ENCODE measurements at regions of chr4 and their contacts with region 1.

Region 1: DNA sequence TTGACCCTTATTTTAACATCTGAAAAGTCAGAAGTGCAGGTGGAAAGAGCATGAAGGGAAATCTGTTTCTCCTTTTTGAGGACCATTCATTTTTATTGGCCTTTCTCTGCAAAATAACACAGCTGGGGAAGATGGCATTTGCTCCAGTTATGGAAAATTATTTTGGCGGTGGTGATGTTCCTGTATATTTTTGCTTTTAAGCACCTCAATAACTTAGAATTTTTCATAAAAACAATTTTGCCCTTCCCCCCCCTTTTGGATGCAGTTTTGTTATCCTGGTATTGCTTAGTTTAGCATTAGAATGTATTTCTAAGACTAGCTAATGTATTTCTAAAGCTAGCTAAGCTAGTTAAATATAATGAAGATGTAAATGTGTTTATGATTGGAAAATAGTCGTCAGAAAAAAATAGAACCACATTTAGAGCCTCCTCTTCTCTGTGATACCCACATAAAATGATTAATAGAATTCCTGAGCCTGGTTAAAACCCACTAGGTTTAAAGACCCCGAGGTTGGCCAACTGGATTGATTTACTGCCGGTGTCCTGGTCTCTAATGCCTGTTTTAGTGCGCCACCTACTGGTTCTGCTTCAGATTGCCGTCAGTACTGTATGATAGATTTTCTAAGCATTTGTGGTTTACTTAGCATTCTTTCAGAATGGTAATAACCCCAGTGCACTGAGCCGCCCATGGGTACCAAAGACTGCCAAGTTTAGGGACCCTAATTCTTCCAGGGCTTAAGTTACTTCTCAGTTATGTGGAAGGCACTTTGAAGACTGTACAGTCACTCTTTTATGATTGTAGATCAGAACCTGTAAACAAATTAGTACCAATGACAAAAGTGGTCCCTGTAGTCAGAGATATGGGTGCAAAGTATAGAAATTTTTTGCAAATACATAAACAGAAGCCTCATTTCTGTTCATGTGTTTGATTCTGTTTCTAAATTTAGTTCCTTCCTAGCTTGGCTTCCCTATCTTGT is 11.4 kb downstream of the KLF3 start:
- DNase-seq: peak; percentile 95
- H3K4me3 Mint-ChIP-seq: peak overlapping the region; percentile 71
- H3K27ac Mint-ChIP-seq: peak overlapping the region; percentile 82
- H3K4me1 Mint-ChIP-seq: peaks cover 85% of the 10 kb centered on the region
- H3K27me3 Mint-ChIP-seq: no peaks in the 10 kb centered on the region

Region 2: GRCh38 chr4:38062088-38062893 is 613.1 kb before region 1 on chr4:
- CTCF ChIA-PET with region 1: interaction called, 6 read pairs
- intact Hi-C with region 1: loop called (anchors 1 kb)
- DNase-seq: peak; percentile 84
- H3K4me3 Mint-ChIP-seq: peak overlapping the region; percentile 79
- H3K27ac Mint-ChIP-seq: peak overlapping the region; percentile 75
- H3K4me1 Mint-ChIP-seq: peaks cover 12% of the 10 kb centered on the region
- H3K27me3 Mint-ChIP-seq: no peaks in the 10 kb centered on the region

Region 3: DNA sequence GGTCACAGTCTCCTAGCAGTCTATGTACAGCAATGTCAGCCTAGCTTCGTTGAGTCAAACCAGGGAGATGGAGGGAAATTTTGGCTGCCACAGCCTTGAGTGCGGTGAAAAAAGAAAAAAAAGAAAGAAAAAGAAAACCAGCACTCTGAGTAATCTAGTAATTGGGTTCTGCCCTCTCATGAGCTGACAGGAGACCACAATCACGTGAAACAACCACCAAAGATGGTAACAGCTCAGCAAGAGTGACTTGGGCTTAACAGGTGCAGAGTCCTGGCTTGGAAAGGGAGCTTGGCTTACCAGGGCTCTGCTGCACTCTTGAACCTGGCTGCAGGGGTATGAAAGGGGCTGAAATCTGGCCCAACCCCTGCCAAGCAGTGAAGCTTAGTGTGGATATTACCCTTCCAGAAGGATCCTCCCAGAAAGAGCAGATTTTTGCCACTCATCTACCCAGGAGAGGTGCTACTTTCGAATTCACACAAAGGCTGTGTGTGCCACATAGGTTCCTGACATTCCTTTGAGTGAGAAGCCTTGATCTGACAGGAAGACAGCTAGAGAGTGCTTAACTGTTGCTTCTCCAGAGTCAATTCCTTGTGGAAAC is 364.9 kb before region 1 on chr4:
- CTCF ChIA-PET with region 1: interaction called, 6 read pairs
- intact Hi-C with region 1: loop called (anchors 2 kb)
- DNase-seq: peak; percentile 89
- H3K4me3 Mint-ChIP-seq: peak overlapping the region; percentile 10
- H3K27ac Mint-ChIP-seq: peak overlapping the region; percentile 72
- H3K4me1 Mint-ChIP-seq: peaks cover 65% of the 10 kb centered on the region
- H3K27me3 Mint-ChIP-seq: peaks cover 2% of the 10 kb centered on the region

Region 4: DNA sequence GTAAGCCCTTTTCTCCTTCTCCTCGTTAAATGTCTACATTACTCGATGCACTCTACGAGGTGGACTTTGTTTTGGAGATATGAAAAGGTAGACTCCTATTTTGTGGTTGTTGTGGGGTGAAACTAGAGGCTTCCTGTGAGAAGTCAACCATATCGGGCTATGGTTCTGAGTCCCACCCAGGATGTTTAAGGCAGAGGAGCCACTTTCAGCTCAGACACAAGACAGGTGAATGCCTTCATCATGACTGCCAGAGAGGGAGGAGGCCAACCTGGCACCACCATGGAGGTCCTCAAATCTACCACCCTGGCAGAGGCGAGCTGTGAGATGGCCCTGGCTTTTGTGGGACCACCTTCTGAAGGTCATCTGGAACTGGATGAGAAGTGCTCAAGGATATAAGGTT is 165.9 kb before region 1 on chr4:
- CTCF ChIA-PET with region 1: no interaction called
- intact Hi-C with region 1: loop called (anchors 2 kb)
- DNase-seq: peak; percentile 62
- H3K4me3 Mint-ChIP-seq: peak overlapping the region; percentile 53
- H3K27ac Mint-ChIP-seq: no peak overlapping the region
- H3K4me1 Mint-ChIP-seq: peaks cover 86% of the 10 kb centered on the region
- H3K27me3 Mint-ChIP-seq: no peaks in the 10 kb centered on the region

Region 5: DNA sequence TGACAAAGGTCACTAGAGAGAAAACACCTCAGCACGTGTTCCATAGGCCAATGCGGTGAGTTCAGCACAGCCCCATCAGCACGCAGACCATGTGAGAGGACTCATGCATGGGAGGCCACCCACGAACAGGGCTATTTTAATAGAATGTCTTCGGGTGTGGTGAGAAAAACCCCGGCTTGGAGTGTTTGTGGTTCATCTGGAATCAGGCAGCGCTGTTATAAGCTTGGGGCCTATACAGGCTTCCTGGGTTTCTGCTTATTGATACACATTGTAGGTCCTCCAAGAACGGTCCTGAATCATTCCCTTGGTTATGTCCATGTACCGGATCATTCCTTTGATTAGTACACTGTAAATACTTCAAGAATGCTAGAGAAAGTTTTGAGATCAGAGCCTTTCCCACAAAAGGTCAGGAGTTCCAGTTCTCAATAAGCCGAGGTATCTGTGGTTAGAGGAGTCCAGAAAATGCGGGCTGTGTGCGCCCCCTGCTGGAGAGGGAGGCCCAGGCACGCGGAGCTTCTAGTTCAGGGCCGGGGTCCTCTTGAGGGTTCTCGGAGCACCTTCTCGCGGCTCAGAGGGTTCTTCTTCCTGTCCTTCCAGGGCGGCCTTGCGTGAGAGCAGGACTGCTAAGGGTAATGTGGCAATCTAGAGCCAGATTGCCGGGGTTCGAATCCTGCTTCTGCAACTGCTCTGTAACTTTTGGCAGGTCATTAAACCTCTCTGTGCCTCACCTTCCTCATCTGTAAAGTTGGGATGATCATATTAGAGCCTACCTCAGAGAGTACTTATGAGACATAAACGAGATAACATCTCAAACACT is 55.6 kb after region 1 on chr4:
- CTCF ChIA-PET with region 1: interaction called, 22 read pairs
- intact Hi-C with region 1: loop called (anchors 1 kb)
- DNase-seq: peak; percentile 93
- H3K4me3 Mint-ChIP-seq: no peak overlapping the region
- H3K27ac Mint-ChIP-seq: no peak overlapping the region
- H3K4me1 Mint-ChIP-seq: peaks cover 16% of the 10 kb centered on the region
- H3K27me3 Mint-ChIP-seq: no peaks in the 10 kb centered on the region